GM10248 (cell line): ENCODE measurements at regions of chr15 and their contacts with region 1.

Region 1: GRCh38 chr15:59160880-59161593 is 45.6 kb upstream of the LDHAL6B start:
- DNase-seq: no peak
- CTCF ChIP-seq: peak; percentile 39

Region 2: DNA sequence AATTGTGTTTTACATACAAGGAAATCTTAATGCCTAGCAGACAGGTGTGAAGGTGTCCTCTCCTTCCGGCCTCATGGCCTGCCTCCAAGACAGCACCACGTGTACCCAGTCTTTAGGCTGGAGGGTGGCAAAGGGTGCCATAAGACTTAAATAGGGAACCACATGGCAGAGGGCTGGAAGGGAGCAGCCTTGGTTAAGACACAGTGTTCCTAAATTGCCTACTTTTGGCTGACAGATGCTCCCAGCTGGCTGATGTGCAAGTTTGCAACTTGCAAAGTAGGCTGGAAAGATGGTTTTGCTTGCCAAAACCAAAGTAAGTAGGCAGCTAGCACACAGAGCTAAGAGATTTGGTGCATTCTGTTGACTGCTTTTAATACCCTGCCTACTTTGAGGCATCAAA is 10.9 kb before region 1 on chr15:
- CTCF ChIA-PET with region 1: interaction called, 36 read pairs
- POLR2A ChIA-PET with region 1: no interaction called
- DNase-seq: no peak
- CTCF ChIP-seq: no peak

Region 3: DNA sequence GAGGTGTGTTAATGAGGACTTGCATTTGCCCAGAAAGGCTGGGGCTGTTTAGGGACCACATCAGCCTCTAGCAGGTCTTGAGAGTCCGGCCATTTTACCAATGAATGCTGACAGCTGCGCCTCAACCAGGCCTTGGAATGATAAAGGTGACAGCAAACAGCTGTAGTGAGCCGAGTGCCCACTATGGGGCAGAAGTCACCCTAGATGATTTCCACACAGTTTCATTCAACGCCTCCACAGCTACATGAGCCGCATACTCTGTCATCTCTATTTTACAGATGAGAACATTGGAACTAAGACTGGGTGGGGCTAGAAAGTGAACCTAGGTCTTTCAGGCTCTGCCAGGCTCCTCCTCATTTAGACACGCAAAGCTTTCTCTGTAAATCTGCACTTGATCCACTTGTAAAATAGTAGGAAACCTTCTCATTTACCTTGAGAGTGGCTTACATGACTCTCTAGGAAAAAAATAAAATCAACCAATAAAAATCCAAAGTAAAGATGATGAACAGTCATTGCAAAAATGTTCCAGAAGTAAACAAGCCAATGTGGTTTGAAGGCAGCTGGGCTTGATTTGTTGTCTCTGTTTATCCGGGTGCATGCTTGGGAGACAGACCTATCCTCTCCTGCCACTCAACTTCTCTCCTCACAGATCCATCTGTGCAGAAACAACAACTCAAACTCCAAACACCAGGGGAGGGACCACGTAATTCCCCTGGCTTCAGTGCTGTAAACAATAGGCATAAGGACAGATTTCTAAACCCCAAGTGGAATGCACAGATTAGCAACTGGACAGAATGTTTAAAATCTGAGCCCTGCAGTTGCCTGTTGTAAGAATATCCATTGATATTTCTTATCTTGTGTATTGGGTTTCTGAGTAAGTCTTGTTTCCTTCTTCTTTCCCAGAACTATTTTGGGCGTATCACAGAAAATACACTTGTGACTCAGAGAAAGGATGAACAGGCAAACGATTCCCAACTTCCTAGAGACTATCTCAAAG is 14.1 kb after region 1 on chr15:
- CTCF ChIA-PET with region 1: interaction called, 12 read pairs
- POLR2A ChIA-PET with region 1: no interaction called
- DNase-seq: peak; percentile 47
- CTCF ChIP-seq: peak; percentile 28